ENCODE measurements at regions of chr1 and their contacts with region 1.

Region 1: GRCh38 chr1:234499119-234499942 is 20.4 kb upstream of the TARBP1 start:
- DNase-seq: peak; percentile 96
- H3K4me3 Mint-ChIP-seq: peak overlapping the region; percentile 50
- H3K27ac Mint-ChIP-seq: peak overlapping the region; percentile 85
- H3K4me1 Mint-ChIP-seq: peaks cover 70% of the 10 kb centered on the region
- H3K27me3 Mint-ChIP-seq: no peaks in the 10 kb centered on the region

Region 2: DNA sequence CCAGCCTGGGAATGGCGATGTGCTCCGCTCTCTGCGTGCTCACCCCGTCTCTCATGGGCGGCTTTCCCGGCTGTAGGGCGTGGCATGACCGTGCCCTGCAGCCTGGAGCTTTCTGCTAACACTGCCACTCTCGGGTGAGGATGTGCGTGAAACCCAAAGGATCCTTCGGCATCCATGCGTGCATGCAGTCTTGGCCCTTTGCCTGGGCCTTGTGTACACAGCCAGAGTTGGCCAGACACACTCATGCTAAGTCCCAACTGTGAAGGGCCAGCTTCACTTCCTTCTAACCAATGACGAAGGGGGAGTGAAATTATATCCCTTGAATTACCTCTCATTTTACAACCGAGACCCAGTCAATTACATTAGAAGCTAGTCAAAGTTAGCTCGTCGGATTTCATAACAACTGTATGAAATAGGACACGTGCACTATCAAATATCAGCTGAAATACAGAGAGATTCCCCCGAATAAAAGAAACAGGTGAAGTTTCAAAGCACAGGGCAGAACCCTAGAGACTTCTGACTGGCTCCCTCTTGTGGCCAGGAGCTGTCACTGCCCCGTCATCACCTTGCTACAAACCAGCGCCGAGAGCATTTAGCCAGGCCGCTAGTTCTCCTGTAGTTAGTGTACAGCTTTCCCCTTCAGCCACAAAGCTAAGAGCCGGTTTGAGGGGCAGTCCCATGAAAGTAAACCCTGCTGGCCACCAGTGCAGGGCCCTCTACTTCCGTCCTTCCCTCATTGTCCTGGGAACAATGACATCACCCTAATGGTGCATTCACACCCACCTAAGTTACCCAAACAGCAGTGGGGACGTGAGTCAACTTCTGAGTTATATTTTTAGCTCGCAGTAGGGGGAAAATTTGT is 189.5 kb before region 1 on chr1:
- intact Hi-C with region 1: no loop called
- DNase-seq: peak; percentile 91
- H3K4me3 Mint-ChIP-seq: peak overlapping the region; percentile 50
- H3K27ac Mint-ChIP-seq: peak overlapping the region; percentile 70
- H3K4me1 Mint-ChIP-seq: peaks cover 20% of the 10 kb centered on the region
- H3K27me3 Mint-ChIP-seq: peaks cover 5% of the 10 kb centered on the region

Region 3: GRCh38 chr1:234427950-234428642 is 71.2 kb before region 1 on chr1:
- intact Hi-C with region 1: no loop called
- DNase-seq: no peak
- H3K4me3 Mint-ChIP-seq: no peak overlapping the region
- H3K27ac Mint-ChIP-seq: no peak overlapping the region
- H3K4me1 Mint-ChIP-seq: peaks cover 2% of the 10 kb centered on the region
- H3K27me3 Mint-ChIP-seq: no peaks in the 10 kb centered on the region

Region 4: GRCh38 chr1:234486498-234487448 is 12.6 kb before region 1 on chr1:
- intact Hi-C with region 1: loop called (anchors 1 kb)
- DNase-seq: peak; percentile 83
- H3K4me3 Mint-ChIP-seq: peak overlapping the region; percentile 68
- H3K27ac Mint-ChIP-seq: peak overlapping the region; percentile 96
- H3K4me1 Mint-ChIP-seq: peaks cover 35% of the 10 kb centered on the region
- H3K27me3 Mint-ChIP-seq: peaks cover 12% of the 10 kb centered on the region

Region 5: GRCh38 chr1:234722904-234723720 is 223.8 kb after region 1 on chr1:
- intact Hi-C with region 1: loop called (anchors 1 kb)
- DNase-seq: peak; percentile 66
- H3K4me3 Mint-ChIP-seq: peak overlapping the region; percentile 76
- H3K27ac Mint-ChIP-seq: peak overlapping the region; percentile 96
- H3K4me1 Mint-ChIP-seq: peaks cover 82% of the 10 kb centered on the region
- H3K27me3 Mint-ChIP-seq: peaks cover 2% of the 10 kb centered on the region

Region 6: DNA sequence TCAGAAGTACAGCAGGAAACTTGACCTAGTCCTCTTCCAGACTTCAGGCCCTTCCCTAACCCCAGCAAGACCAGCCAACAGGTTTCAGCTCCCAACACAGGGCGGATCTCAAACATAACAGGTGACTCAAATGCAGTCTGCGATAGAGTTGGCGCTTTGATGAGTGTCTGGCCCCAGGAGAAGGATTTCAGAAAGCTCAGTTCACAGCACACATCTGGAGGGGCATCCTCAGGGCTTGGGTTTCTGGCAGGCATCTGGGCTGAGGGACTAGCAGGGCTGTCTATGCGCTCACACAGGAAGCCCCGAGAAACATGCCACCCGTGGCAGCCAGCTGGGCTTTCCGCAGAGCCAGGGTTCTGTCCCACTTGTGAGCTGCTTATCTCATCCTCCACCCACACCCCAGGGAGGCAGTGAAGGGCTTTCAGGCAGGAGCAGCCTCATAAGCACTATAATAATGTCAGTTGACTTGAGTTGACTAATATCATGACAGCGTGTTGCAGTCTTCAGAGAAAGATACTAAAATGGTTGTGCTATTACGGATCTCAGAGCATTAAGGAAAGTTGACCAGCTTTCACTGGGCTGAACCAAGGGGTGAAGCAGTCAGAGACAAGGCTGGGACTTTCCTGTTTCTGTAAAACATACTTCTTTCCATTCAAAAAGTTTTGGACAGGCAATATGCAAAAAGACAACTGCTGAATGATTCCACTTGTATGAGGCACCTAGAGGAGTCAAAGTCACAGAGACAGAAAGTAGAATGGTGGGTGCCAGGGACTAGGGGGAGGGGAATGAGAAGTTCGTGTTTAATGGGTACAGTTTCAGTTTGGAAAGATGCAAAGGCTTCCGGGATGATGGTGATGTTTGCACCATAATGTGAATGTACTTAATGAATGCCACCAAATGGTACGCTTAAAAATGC is 343.7 kb after region 1 on chr1:
- intact Hi-C with region 1: loop called (anchors 1 kb)
- DNase-seq: peak; percentile 89
- H3K4me3 Mint-ChIP-seq: peak overlapping the region; percentile 74
- H3K27ac Mint-ChIP-seq: peak overlapping the region; percentile 94
- H3K4me1 Mint-ChIP-seq: peaks cover 84% of the 10 kb centered on the region
- H3K27me3 Mint-ChIP-seq: no peaks in the 10 kb centered on the region

Region 7: GRCh38 chr1:234963180-234963903 is 464.0 kb after region 1 on chr1:
- intact Hi-C with region 1: loop called (anchors 1 kb)
- DNase-seq: peak; percentile 96
- H3K4me3 Mint-ChIP-seq: peak overlapping the region; percentile 79
- H3K27ac Mint-ChIP-seq: peak overlapping the region; percentile 97
- H3K4me1 Mint-ChIP-seq: peaks cover 69% of the 10 kb centered on the region
- H3K27me3 Mint-ChIP-seq: no peaks in the 10 kb centered on the region

Region 8: GRCh38 chr1:235415008-235415904 is 915.9 kb after region 1 on chr1:
- intact Hi-C with region 1: loop called (anchors 5 kb)
- DNase-seq: peak; percentile 87
- H3K4me3 Mint-ChIP-seq: no peak overlapping the region
- H3K27ac Mint-ChIP-seq: no peak overlapping the region
- H3K4me1 Mint-ChIP-seq: peaks cover 6% of the 10 kb centered on the region
- H3K27me3 Mint-ChIP-seq: no peaks in the 10 kb centered on the region